ENCODE measurements at regions of chr5 and their contacts with region 1.

Region 1: GRCh38 chr5:154311362-154311761 is 120.8 kb downstream of the GALNT10 start:
- DNase-seq: peak; percentile 63
- H3K4me3 Mint-ChIP-seq: no peak overlapping the region
- H3K27ac Mint-ChIP-seq: peak overlapping the region; percentile 69
- H3K4me1 Mint-ChIP-seq: peaks cover 33% of the 10 kb centered on the region
- H3K27me3 Mint-ChIP-seq: no peaks in the 10 kb centered on the region

Region 2: GRCh38 chr5:154189819-154190594 is 121.4 kb before region 1 on chr5:
- CTCF ChIA-PET with region 1: no interaction called
- intact Hi-C with region 1: loop called (anchors 2 kb)
- DNase-seq: peak; percentile 82
- H3K4me3 Mint-ChIP-seq: peak overlapping the region; percentile 81
- H3K27ac Mint-ChIP-seq: no peak overlapping the region
- H3K4me1 Mint-ChIP-seq: peaks cover 32% of the 10 kb centered on the region
- H3K27me3 Mint-ChIP-seq: peaks cover 7% of the 10 kb centered on the region

Region 3: GRCh38 chr5:154196955-154197652 is 114.3 kb before region 1 on chr5:
- CTCF ChIA-PET with region 1: interaction called, 3 read pairs
- intact Hi-C with region 1: loop called (anchors 1 kb)
- DNase-seq: no peak
- H3K4me3 Mint-ChIP-seq: no peak overlapping the region
- H3K27ac Mint-ChIP-seq: peak overlapping the region; percentile 86
- H3K4me1 Mint-ChIP-seq: peaks cover 67% of the 10 kb centered on the region
- H3K27me3 Mint-ChIP-seq: no peaks in the 10 kb centered on the region

Region 4: DNA sequence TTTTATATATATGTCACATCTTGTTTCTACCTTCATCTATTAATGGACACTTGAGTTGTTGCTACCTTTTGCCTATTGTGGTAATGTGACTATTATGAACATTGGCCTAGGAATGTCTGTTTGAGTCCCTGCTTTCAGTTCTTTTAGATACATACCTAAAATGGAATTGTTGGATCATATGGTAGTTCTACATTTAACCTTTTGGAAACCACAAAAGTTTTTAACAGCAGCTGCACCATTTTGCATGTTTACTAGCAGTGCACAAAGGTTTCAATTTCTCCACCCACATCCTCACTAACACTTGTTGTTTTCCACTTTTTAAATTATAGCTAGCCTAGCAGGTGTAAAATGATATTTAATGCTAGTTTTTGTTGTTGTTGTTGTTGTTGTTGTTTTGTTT is 32.5 kb before region 1 on chr5:
- CTCF ChIA-PET with region 1: interaction called, 6 read pairs
- intact Hi-C with region 1: loop called (anchors 1 kb)
- DNase-seq: no peak
- H3K4me3 Mint-ChIP-seq: no peak overlapping the region
- H3K27ac Mint-ChIP-seq: no peak overlapping the region
- H3K4me1 Mint-ChIP-seq: peaks cover 30% of the 10 kb centered on the region
- H3K27me3 Mint-ChIP-seq: no peaks in the 10 kb centered on the region

Region 5: GRCh38 chr5:155987265-155987810 is 1676.0 kb after region 1 on chr5:
- CTCF ChIA-PET with region 1: no interaction called
- intact Hi-C with region 1: no loop called
- DNase-seq: no peak
- H3K4me3 Mint-ChIP-seq: no peak overlapping the region
- H3K27ac Mint-ChIP-seq: no peak overlapping the region
- H3K4me1 Mint-ChIP-seq: no peaks in the 10 kb centered on the region
- H3K27me3 Mint-ChIP-seq: peaks cover 5% of the 10 kb centered on the region